GM12878 (cell line): ENCODE measurements at regions of chr9 and their contacts with region 1.

Region 1: GRCh38 chr9:68999393-69000105 is 14.4 kb downstream of the PRKACG start:
- DNase-seq: peak; percentile 66
- ATAC-seq: peak; percentile 99
- H3K4me3 ChIP-seq: no peak overlapping the region
- H3K27ac ChIP-seq: no peak overlapping the region
- H3K4me1 ChIP-seq: peaks cover 11% of the 10 kb centered on the region
- H3K27me3 ChIP-seq: no peaks in the 10 kb centered on the region
- CTCF ChIP-seq: peak; percentile 84 to 91 (median 89)
- EP300 ChIP-seq: no peak
- POLR2A ChIP-seq: no peak
- RAD21 ChIP-seq: peak; percentile 99

Region 2: DNA sequence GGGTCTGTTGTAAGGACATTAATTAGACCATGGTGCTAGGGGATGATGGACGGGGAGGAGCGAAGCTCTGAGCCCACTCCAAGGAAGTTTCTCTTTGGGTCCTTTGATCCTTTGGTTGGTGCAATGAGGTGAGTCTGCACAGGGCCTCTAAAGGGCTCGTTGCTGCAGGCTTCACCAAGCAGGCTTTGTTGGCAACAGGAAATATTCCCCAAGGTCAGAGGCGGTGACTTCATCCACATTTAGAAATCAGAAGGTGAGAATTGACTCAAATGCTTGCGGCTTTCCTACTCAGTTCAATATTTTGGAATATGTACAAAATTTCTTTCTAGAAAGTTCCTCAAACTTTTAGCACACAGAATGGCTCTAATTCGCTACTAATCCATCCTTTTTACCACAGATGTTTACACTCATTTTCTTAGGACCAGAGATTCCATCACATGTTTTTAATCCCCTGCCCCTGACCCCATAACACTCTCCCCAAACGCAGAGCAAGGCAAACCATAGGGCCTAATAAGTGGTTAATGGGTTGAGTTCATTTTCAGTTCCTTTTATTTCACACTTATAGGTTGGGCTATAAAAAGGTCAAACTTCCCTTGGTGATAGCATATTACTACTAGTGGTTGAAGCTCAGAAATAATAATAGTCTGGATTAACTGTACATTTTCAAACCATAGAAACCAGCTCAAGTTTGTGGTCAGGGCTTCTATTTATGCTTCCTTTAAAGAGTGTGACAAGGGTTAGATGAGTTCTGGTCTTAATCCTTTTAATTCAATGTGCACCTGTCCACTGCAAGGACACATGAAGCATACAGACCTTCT is 421.6 kb before region 1 on chr9:
- CTCF ChIA-PET with region 1: interaction called, 39 read pairs
- POLR2A ChIA-PET with region 1: no interaction called
- RAD21 ChIA-PET with region 1: interaction called, 5 read pairs
- SMC1A ChIA-PET with region 1: interaction called, 14 read pairs
- in situ Hi-C with region 1: loop called (anchors 5 kb)
- intact Hi-C with region 1: no loop called
- DNase-seq: peak; percentile 68
- ATAC-seq: peak; percentile 94
- H3K4me3 ChIP-seq: 0 out of 2 replicates have a peak overlapping the region, but pooled peaks have one; percentile 3
- H3K27ac ChIP-seq: peak overlapping the region; percentile 33; the same call in 1 of the 2 replicates
- H3K4me1 ChIP-seq: peaks cover 26% of the 10 kb centered on the region
- H3K27me3 ChIP-seq: no peaks in the 10 kb centered on the region
- CTCF ChIP-seq: no peak
- EP300 ChIP-seq: peak in 1 of 2 experiments; percentile 58
- POLR2A ChIP-seq: no peak
- RAD21 ChIP-seq: no peak

Region 3: GRCh38 chr9:68685770-68686169 is 313.8 kb before region 1 on chr9:
- CTCF ChIA-PET with region 1: interaction called, 15 read pairs
- POLR2A ChIA-PET with region 1: no interaction called
- RAD21 ChIA-PET with region 1: interaction called, 6 read pairs
- SMC1A ChIA-PET with region 1: interaction called, 3 read pairs
- in situ Hi-C with region 1: loop called (anchors 5 kb)
- intact Hi-C with region 1: loop called (anchors 2 kb)
- DNase-seq: no peak
- ATAC-seq: peak; percentile 99
- H3K4me3 ChIP-seq: no peak overlapping the region
- H3K27ac ChIP-seq: no peak overlapping the region
- H3K4me1 ChIP-seq: no peaks in the 10 kb centered on the region
- H3K27me3 ChIP-seq: no peaks in the 10 kb centered on the region
- CTCF ChIP-seq: peak; percentile 73 to 86 (median 77)
- EP300 ChIP-seq: no peak
- POLR2A ChIP-seq: no peak
- RAD21 ChIP-seq: peak; percentile 90

Region 4: GRCh38 chr9:68779558-68780384 is 219.8 kb before region 1 on chr9:
- CTCF ChIA-PET with region 1: interaction called, 4 read pairs
- POLR2A ChIA-PET with region 1: no interaction called
- RAD21 ChIA-PET with region 1: interaction called, 6 read pairs
- SMC1A ChIA-PET with region 1: interaction called, 3 read pairs
- in situ Hi-C with region 1: loop called (anchors 5 kb)
- intact Hi-C with region 1: loop called (anchors 2 kb)
- DNase-seq: peak; percentile 77
- ATAC-seq: peak; percentile 90
- H3K4me3 ChIP-seq: peak overlapping the region; percentile 83
- H3K27ac ChIP-seq: peak overlapping the region; percentile 92
- H3K4me1 ChIP-seq: peaks cover 2% of the 10 kb centered on the region; the same call in 1 of the 2 replicates
- H3K27me3 ChIP-seq: no peaks in the 10 kb centered on the region
- CTCF ChIP-seq: peak; percentile 31 to 56 (median 38); a peak in 5 of 6 replicates
- EP300 ChIP-seq: no peak
- POLR2A ChIP-seq: peak; percentile 93
- RAD21 ChIP-seq: peak; percentile 37

Region 5: DNA sequence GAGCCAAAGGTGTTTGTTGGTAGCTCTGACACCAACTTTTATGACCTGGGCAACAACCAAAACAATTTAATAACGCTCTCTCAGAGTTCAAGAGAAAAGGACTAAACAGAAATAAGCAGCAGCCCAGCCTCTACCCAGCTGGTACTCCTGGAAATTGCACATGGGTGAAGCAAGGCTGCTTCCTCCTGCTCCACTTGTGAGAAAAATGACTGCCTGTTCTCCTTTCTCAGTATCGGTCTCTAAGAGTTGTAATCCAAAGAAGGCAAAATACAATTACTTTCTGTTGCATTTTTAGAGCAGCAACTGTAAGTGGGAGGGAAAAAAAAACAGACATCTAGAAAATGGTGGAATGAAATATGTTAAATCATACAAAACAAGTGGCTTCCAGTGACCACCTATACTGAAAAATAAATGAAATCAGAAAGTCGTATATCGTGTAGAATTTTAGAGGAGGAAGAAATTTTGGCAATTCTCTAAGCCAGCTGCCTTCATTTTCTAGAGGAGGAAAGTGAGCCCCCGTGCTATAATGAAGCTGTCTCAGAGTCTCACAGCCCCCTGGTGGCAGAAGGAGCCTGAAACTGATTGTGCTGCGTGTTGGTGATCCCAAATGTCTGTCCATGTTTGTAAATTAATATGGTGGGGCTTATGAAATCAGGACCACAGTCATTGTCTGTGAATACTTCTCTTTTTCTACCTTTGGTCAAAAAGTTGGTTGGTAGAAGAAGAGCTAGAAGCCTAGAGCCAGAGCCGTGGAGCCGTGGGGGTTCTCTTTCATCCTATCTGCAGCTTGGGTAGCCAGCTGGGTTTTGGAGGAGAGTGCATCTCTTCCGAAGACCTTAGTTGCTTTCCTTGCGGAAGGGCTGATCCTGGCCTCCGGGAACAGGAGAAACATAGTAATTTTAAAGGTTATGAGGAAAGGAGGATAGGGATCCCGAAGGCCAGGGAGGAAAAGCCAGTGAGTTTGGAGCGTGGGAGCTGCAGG is 154.6 kb before region 1 on chr9:
- CTCF ChIA-PET with region 1: interaction called, 10 read pairs
- POLR2A ChIA-PET with region 1: no interaction called
- RAD21 ChIA-PET with region 1: interaction called, 3 read pairs
- SMC1A ChIA-PET with region 1: interaction called, 8 read pairs
- in situ Hi-C with region 1: loop called (anchors 5 kb)
- intact Hi-C with region 1: loop called (anchors 5 kb)
- DNase-seq: no peak
- ATAC-seq: peak; percentile 73
- H3K4me3 ChIP-seq: peak overlapping the region; percentile 21; the same call in 1 of the 2 replicates
- H3K27ac ChIP-seq: peak overlapping the region; percentile 32; the same call in 1 of the 2 replicates
- H3K4me1 ChIP-seq: peaks cover 19% of the 10 kb centered on the region
- H3K27me3 ChIP-seq: no peaks in the 10 kb centered on the region
- CTCF ChIP-seq: peak; percentile 52 to 63 (median 54)
- EP300 ChIP-seq: no peak
- POLR2A ChIP-seq: no peak
- RAD21 ChIP-seq: peak; percentile 69

Region 6: DNA sequence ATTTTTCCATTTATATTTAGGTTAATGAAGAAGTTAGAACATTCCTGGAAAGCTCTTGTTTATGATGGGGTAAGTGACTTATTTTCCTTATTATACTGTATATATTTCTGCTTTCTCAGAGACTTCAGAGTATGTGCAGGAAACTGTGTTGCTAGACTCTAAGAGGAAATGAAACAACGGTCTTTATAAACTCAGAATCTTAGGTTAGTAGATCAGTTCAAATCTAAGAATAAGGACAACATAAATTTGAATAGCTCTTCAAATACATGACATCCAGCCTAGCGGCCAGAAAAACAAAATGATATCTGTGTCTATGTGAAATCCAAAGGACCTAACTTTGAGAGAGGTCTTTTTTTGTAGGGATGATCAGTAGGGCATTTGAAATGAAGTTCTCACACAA is 79.9 kb before region 1 on chr9:
- CTCF ChIA-PET with region 1: interaction called, 3 read pairs
- POLR2A ChIA-PET with region 1: no interaction called
- RAD21 ChIA-PET with region 1: interaction called, 5 read pairs
- SMC1A ChIA-PET with region 1: interaction called, 4 read pairs
- in situ Hi-C with region 1: no loop called
- intact Hi-C with region 1: loop called (anchors 5 kb)
- DNase-seq: no peak
- ATAC-seq: peak; percentile 68
- H3K4me3 ChIP-seq: no peak overlapping the region
- H3K27ac ChIP-seq: peak overlapping the region; percentile 67
- H3K4me1 ChIP-seq: peaks cover 24% of the 10 kb centered on the region
- H3K27me3 ChIP-seq: no peaks in the 10 kb centered on the region
- CTCF ChIP-seq: no peak
- EP300 ChIP-seq: no peak
- POLR2A ChIP-seq: no peak
- RAD21 ChIP-seq: no peak

Region 7: DNA sequence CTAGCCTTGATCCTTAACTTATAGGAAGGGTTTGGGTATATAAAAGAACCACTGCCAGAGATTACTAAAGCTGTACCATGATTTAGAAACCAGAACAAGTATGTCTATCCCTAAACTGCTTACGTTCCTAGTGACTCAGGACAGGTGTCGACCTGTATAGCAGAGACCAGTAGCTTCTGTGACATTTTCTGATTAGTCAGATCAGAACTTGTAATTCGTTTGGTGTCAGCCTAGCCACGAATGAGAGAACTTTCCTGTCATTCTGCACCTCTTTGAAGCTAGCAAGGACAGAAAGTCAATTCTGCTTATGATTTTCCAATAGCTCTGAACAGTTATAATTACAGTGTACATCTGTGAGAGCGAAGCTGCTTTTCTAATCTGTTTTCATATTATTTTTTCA is 25.1 kb before region 1 on chr9:
- CTCF ChIA-PET with region 1: interaction called, 12 read pairs
- POLR2A ChIA-PET with region 1: no interaction called
- RAD21 ChIA-PET with region 1: interaction called, 6 read pairs
- SMC1A ChIA-PET with region 1: interaction called, 8 read pairs
- in situ Hi-C with region 1: no loop called
- intact Hi-C with region 1: no loop called
- DNase-seq: peak; percentile 84
- ATAC-seq: peak; percentile 92
- H3K4me3 ChIP-seq: peak overlapping the region; percentile 28; the same call in 1 of the 2 replicates
- H3K27ac ChIP-seq: peak overlapping the region; percentile 66
- H3K4me1 ChIP-seq: peaks cover 36% of the 10 kb centered on the region
- H3K27me3 ChIP-seq: no peaks in the 10 kb centered on the region
- CTCF ChIP-seq: no peak
- EP300 ChIP-seq: peak; percentile 69 to 76; a peak in 2 of 4 replicates
- POLR2A ChIP-seq: no peak
- RAD21 ChIP-seq: no peak

Region 8: GRCh38 chr9:69346998-69347397 is 347.4 kb after region 1 on chr9:
- CTCF ChIA-PET with region 1: no interaction called
- POLR2A ChIA-PET with region 1: no interaction called
- RAD21 ChIA-PET with region 1: no interaction called
- SMC1A ChIA-PET with region 1: no interaction called
- in situ Hi-C with region 1: no loop called
- intact Hi-C with region 1: no loop called
- DNase-seq: no peak
- ATAC-seq: no peak
- H3K4me3 ChIP-seq: no peak overlapping the region
- H3K27ac ChIP-seq: no peak overlapping the region
- H3K4me1 ChIP-seq: no peaks in the 10 kb centered on the region
- H3K27me3 ChIP-seq: no peaks in the 10 kb centered on the region; a peak in 1 of 4 replicates
- CTCF ChIP-seq: no peak
- EP300 ChIP-seq: no peak
- POLR2A ChIP-seq: no peak
- RAD21 ChIP-seq: no peak